Activated CD4-positive, alpha-beta T cell treated with anti-CD3 and anti-CD28 coated beads for 36 hours (primary cell): ENCODE measurements at regions of chr6 and their contacts with region 1.

Region 1: GRCh38 chr6:89675949-89676748 is 37.6 kb upstream of the LYRM2 start:
- DNase-seq: no peak
- ATAC-seq: no peak
- H3K4me3 Mint-ChIP-seq: no peak overlapping the region
- H3K27ac Mint-ChIP-seq: no peak overlapping the region
- H3K4me1 Mint-ChIP-seq: no peaks in the 10 kb centered on the region
- H3K27me3 Mint-ChIP-seq: no peaks in the 10 kb centered on the region

Region 2: GRCh38 chr6:89649672-89650071 is 26.5 kb before region 1 on chr6:
- CTCF ChIA-PET with region 1: no interaction called
- POLR2A ChIA-PET with region 1: no interaction called
- intact Hi-C with region 1: no loop called
- DNase-seq: no peak
- ATAC-seq: no peak
- H3K4me3 Mint-ChIP-seq: no peak overlapping the region
- H3K27ac Mint-ChIP-seq: no peak overlapping the region
- H3K4me1 Mint-ChIP-seq: no peaks in the 10 kb centered on the region
- H3K27me3 Mint-ChIP-seq: no peaks in the 10 kb centered on the region

Region 3: GRCh38 chr6:89749918-89750317 is 73.8 kb after region 1 on chr6:
- CTCF ChIA-PET with region 1: no interaction called
- POLR2A ChIA-PET with region 1: no interaction called
- intact Hi-C with region 1: loop called in 1 of 2 experiments (anchors 5 kb)
- DNase-seq: no peak
- ATAC-seq: no peak
- H3K4me3 Mint-ChIP-seq: no peak overlapping the region
- H3K27ac Mint-ChIP-seq: no peak overlapping the region
- H3K4me1 Mint-ChIP-seq: no peaks in the 10 kb centered on the region
- H3K27me3 Mint-ChIP-seq: no peaks in the 10 kb centered on the region